Ovary (tissue), 10 donors: ENCODE measurements at regions of chr2 and their contacts with region 1.

Region 1: GRCh38 chr2:217713395-217714286 is 289.2 kb downstream of the TNS1 start:
- DNase-seq: peak; percentile 73 to 89 (median 84)
- H3K4me3 ChIP-seq: no peak overlapping the region
- H3K27ac ChIP-seq: peak overlapping the region in 1 of 2 donors; percentile 2
- H3K4me1 ChIP-seq: peaks cover 11% of the 10 kb centered on the region
- H3K27me3 ChIP-seq: no peaks in the 10 kb centered on the region
- CTCF ChIP-seq: peak; percentile 94 to 95 (median 95)
- EP300 ChIP-seq: no peak
- POLR2A ChIP-seq: no peak

Region 2: GRCh38 chr2:216687646-216688045 is 1026.0 kb before region 1 on chr2:
- intact Hi-C with region 1: loop called in 1 of 4 experiments (anchors 5 kb)
- DNase-seq: peak in 3 of 5 donors; percentile 31 to 46 (median 42)
- H3K4me3 ChIP-seq: no peak overlapping the region
- H3K27ac ChIP-seq: peak overlapping the region in 1 of 2 donors; percentile 21
- H3K4me1 ChIP-seq: peaks cover 31% of the 10 kb centered on the region
- H3K27me3 ChIP-seq: no peaks in the 10 kb centered on the region
- CTCF ChIP-seq: peak in 1 of 3 donors; percentile 21
- EP300 ChIP-seq: no peak
- POLR2A ChIP-seq: no peak

Region 3: GRCh38 chr2:217521820-217522219 is 191.8 kb before region 1 on chr2:
- intact Hi-C with region 1: loop called (anchors 5 to 10 kb)
- DNase-seq: no peak
- H3K4me3 ChIP-seq: no peak overlapping the region
- H3K27ac ChIP-seq: no peak overlapping the region
- H3K4me1 ChIP-seq: no peaks in the 10 kb centered on the region
- H3K27me3 ChIP-seq: no peaks in the 10 kb centered on the region
- CTCF ChIP-seq: no peak
- EP300 ChIP-seq: no peak
- POLR2A ChIP-seq: no peak